Body of pancreas (tissue), 4 donors: ENCODE measurements at regions of chr19 and their contacts with region 1.

Region 1: GRCh38 chr19:17859533-17860330 is at the start of gene RPL18A:
- DNase-seq: peak; percentile 98 to 100 (median 99)
- ATAC-seq: peak; percentile 98
- H3K4me3 ChIP-seq: peak within 1 kb of the TSS; percentile 71 to 92
- H3K27ac ChIP-seq: peak within 1 kb of the TSS; percentile 55 to 93 (median 84)
- H3K4me1 ChIP-seq: peaks cover 33% of the 10 kb centered on the region
- H3K27me3 ChIP-seq: no peaks in the 10 kb centered on the region
- CTCF ChIP-seq: peak; percentile 54 to 94 (median 86)
- POLR2A ChIP-seq: peak; percentile 87 to 96 (median 94)
- total RNA-seq, gene RPL18A: 1,158 to 1,588 TPM

Region 2: DNA sequence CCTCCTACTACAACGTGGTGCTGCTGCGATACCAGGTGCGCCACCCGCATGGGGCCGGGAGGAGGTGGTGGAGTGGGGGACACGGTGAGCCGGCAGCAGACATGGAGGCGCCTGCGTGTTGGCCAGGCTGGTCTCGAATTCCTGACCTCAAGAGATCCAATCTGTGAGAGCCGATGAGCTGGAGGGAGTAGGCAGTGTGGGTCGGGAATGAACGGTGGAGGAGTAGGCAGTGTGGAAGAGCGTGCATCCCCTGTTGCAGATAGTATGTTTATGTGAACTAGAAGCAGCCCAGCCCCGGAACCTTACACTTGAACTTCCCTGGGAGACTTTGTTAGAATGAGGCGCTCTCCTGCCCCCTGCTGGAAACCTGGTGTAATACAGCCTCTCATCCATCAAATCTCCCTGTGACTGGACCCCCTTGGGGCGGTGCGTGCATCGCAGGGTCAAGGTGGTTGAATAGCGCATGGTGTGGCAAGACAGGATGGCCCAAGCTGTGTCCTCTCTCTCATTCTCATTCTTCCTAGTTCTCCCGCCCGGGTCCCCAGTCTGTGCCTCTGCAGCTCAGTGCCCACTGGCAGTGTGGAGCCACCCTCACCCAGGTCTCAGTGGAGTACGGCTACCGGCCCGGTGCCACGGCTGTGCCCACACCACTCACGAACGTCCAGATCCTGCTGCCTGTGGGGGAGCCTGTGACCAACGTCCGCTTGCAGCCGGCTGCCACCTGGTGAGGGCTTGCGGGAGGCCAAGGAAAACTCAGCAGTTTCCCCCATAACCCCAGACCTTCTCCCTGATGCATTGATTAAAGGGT is 75.3 kb before region 1 on chr19:
- intact Hi-C with region 1: loop called (anchors 10 kb)
- DNase-seq: peak; percentile 66 to 73 (median 70)
- ATAC-seq: peak; percentile 63
- H3K4me3 ChIP-seq: no peak overlapping the region
- H3K27ac ChIP-seq: no peak overlapping the region
- H3K4me1 ChIP-seq: no peaks in the 10 kb centered on the region
- H3K27me3 ChIP-seq: no peaks in the 10 kb centered on the region
- CTCF ChIP-seq: peak; percentile 41 to 76 (median 65)
- POLR2A ChIP-seq: no peak

Region 3: GRCh38 chr19:17915951-17916593 is 56.3 kb after region 1 on chr19:
- intact Hi-C with region 1: no loop called
- DNase-seq: peak in 1 of 4 donors; percentile 15
- ATAC-seq: peak; percentile 68
- H3K4me3 ChIP-seq: no peak overlapping the region
- H3K27ac ChIP-seq: peak overlapping the region in 1 of 4 donors; percentile 31
- H3K4me1 ChIP-seq: peaks cover 8% of the 10 kb centered on the region
- H3K27me3 ChIP-seq: no peaks in the 10 kb centered on the region
- CTCF ChIP-seq: no peak
- POLR2A ChIP-seq: no peak

Region 4: GRCh38 chr19:17985037-17985818 is 125.5 kb after region 1 on chr19:
- intact Hi-C with region 1: no loop called
- DNase-seq: no peak
- ATAC-seq: no peak
- H3K4me3 ChIP-seq: no peak overlapping the region
- H3K27ac ChIP-seq: no peak overlapping the region
- H3K4me1 ChIP-seq: no peaks in the 10 kb centered on the region
- H3K27me3 ChIP-seq: no peaks in the 10 kb centered on the region
- CTCF ChIP-seq: no peak
- POLR2A ChIP-seq: no peak

Region 5: DNA sequence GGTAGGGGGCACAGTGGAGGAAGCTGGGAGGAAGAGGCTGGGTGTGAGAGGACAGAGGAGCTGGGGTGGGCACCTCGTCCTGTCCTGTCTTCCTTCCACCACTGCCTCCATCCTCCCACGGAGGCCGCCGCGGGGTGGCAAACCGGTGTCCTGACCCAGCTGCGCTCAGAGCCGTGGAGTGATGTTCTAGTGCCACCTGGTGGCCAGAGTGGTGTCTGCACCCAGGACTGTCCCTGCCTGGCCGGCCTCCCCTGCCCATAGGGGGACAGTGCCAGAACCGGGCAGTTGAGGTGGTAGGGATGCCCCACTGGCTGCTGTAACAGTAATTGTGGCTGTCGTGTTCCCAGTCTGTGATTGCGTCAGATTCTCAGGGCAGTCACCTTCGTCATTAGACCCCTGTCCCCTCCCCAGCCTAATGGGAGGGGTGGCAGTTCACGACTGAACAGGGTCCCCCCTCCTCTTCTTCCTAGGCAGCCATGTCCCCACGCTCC is 137.1 kb after region 1 on chr19:
- intact Hi-C with region 1: loop called (anchors 5 kb)
- DNase-seq: peak; percentile 86 to 90 (median 88)
- ATAC-seq: peak; percentile 82
- H3K4me3 ChIP-seq: no peak overlapping the region
- H3K27ac ChIP-seq: no peak overlapping the region
- H3K4me1 ChIP-seq: peaks cover 9% of the 10 kb centered on the region
- H3K27me3 ChIP-seq: no peaks in the 10 kb centered on the region
- CTCF ChIP-seq: peak; percentile 97 to 99 (median 98)
- POLR2A ChIP-seq: no peak